B cell (primary cell): ENCODE measurements at regions of chr12 and their contacts with region 1.

Region 1: DNA sequence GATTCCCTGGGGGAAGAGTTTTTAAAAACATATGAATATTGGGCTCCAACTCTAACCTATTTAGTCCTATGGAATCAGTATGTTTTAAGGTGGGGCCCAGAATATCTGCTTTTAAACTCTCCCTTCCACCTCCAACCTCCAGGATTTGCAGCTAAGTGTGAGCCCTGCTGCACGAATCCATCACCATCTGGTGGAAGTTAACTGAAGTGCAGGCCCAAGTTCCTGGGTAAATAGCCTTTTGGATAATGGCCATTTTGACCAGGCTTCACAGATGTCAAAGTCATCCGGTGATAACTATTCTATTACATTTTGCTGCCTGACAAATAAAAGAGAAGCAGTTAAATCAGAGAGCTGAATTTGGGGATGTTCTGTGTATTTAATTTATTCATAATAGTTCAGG is 58.1 kb upstream of the RMST start:
- DNase-seq: peak; percentile 44
- ATAC-seq: no peak
- H3K4me3 ChIP-seq: no peak overlapping the region
- H3K4me3 Mint-ChIP-seq: no peak overlapping the region
- H3K27ac ChIP-seq: no peak overlapping the region
- H3K27ac Mint-ChIP-seq: no peak overlapping the region
- H3K4me1 ChIP-seq: no peaks in the 10 kb centered on the region
- H3K4me1 Mint-ChIP-seq: peaks cover 2% of the 10 kb centered on the region
- H3K27me3 ChIP-seq: no peaks in the 10 kb centered on the region
- H3K27me3 Mint-ChIP-seq: peaks cover 9% of the 10 kb centered on the region
- CTCF ChIP-seq: peak; percentile 73

Region 2: DNA sequence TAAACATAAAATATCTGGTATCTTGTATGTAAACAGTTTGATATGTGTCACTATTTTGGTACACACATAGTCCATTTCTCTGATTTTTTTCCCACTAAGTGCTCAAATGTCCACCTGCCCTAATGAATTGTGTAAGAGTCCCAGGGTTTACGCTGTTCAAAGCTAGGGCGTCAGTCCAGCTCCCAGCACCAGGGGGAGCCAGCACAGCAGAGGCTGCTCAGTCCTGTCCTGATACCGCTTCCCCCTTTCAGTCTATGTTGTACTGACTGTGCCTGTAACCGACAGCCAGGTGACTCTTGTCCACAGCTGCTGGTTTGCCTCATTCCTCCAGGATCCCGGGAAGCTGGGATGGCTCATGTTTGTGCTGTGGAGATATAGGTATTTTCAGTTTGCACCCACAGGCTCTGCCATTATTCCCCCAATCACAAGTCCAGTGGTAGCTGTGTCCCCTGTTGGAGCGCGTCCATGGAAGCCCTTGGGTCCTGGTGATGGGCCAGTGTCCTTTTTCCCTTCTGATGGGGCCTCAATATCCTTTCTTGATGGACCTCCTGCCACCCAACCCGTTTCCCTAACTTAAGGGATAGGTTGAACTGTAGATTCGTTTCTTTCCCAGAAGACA is 255.5 kb before region 1 on chr12:
- CTCF ChIA-PET with region 1: interaction called, 35 read pairs
- POLR2A ChIA-PET with region 1: no interaction called
- intact Hi-C with region 1: no loop called
- DNase-seq: peak; percentile 73
- ATAC-seq: peak; percentile 87
- H3K4me3 ChIP-seq: no peak overlapping the region
- H3K4me3 Mint-ChIP-seq: no peak overlapping the region
- H3K27ac ChIP-seq: no peak overlapping the region
- H3K27ac Mint-ChIP-seq: no peak overlapping the region
- H3K4me1 ChIP-seq: no peaks in the 10 kb centered on the region
- H3K4me1 Mint-ChIP-seq: no peaks in the 10 kb centered on the region
- H3K27me3 ChIP-seq: peaks cover 0 to 5% (median 2%) of the 10 kb centered on the region in 4 experiments
- H3K27me3 Mint-ChIP-seq: peaks cover 20% of the 10 kb centered on the region
- CTCF ChIP-seq: peak; percentile 84

Region 3: GRCh38 chr12:97757481-97758193 is 353.1 kb after region 1 on chr12:
- CTCF ChIA-PET with region 1: no interaction called
- POLR2A ChIA-PET with region 1: no interaction called
- intact Hi-C with region 1: no loop called
- DNase-seq: no peak
- ATAC-seq: no peak
- H3K4me3 ChIP-seq: no peak overlapping the region
- H3K4me3 Mint-ChIP-seq: no peak overlapping the region
- H3K27ac ChIP-seq: no peak overlapping the region
- H3K27ac Mint-ChIP-seq: no peak overlapping the region
- H3K4me1 ChIP-seq: no peaks in the 10 kb centered on the region
- H3K4me1 Mint-ChIP-seq: no peaks in the 10 kb centered on the region
- H3K27me3 ChIP-seq: no peaks in the 10 kb centered on the region
- H3K27me3 Mint-ChIP-seq: no peaks in the 10 kb centered on the region
- CTCF ChIP-seq: no peak

Region 4: DNA sequence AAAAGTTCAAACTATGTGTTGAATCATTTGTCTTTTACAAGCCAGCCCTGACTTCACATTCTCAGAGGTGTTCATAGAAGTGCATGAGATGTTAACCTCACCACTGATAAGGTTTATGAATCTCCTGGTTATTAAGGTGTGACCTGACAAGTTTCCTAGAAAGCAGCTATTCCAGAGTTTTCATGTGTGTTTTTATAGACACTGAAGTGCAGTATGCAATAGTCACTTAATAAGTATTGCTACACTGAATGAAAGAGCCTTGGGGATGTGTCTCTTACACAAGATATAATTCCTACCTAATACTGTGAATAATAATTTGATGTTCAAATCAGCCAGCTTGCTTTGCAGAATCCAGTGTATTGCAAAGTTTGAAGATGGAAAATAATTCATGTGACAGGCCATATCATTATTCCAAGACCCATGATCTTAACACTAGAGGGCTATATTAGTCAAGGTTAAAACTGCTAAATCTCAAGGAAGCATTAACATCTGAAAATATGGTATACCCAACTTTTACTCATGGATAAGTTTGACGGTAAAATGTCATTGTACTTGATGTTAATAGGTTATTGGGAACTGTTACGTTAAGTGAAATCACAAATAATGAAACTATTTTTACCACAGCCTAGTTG is 1201.9 kb after region 1 on chr12:
- CTCF ChIA-PET with region 1: no interaction called
- POLR2A ChIA-PET with region 1: no interaction called
- intact Hi-C with region 1: no loop called
- DNase-seq: no peak
- ATAC-seq: no peak
- H3K4me3 ChIP-seq: no peak overlapping the region
- H3K4me3 Mint-ChIP-seq: peak overlapping the region; percentile 91
- H3K27ac ChIP-seq: peak overlapping the region in 1 of 2 donors; percentile 71
- H3K27ac Mint-ChIP-seq: no peak overlapping the region
- H3K4me1 ChIP-seq: peaks cover 4 to 12% of the 10 kb centered on the region in 2 donors
- H3K4me1 Mint-ChIP-seq: peaks cover 16% of the 10 kb centered on the region
- H3K27me3 ChIP-seq: no peaks in the 10 kb centered on the region
- H3K27me3 Mint-ChIP-seq: no peaks in the 10 kb centered on the region
- CTCF ChIP-seq: no peak